ENCODE measurements at regions of chrX and their contacts with region 1.

Region 1: DNA sequence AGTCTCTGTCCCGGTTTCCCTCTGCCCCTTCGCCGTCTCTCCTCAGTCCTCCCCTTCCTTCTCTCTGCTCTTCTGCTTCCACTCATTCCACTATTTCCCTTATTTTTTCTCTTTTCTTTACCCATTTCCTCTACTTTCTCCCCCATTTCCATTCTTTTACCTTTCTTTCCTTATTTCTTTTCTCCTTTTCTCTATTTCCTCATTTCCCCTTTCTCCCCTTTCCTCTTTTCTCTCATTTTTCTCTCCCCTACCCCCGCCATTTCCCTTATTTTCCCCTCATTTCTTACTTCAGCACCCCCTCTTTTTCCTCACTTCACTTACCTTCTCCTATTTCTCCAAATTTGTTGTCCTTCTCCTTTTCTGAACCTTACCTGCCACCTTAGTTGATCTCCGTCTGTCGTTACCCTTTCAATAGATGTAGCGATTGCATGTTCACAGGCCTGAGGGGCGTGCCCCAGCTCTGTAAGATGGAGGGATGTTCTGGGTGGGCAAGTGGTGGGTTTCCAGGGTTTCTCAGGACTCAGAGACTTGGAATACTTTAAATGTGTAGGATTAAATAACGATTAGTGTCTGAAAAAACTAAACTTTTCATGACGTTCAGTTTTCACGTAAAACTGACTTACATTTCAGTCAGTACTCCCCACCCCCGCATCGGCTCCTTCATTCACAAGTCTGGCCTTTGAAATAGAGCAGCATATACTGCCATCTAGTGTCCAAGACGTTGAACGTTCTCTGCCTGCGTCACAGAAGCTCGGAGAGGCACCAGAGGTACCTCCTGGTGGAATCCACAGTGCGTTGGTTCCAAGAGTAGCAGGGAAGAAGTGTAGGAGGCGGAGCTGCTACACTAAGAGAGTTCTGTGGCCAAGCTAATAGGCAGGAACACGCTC is 641 bp upstream of the NCBP2L start:
- DNase-seq: peak; percentile 40 to 95 (median 72)

Region 2: GRCh38 chrX:107659768-107660167 is 117.1 kb before region 1 on chrX:
- intact Hi-C with region 1: loop called (anchors 1 kb)
- DNase-seq: peak in 1 of 10 donors; percentile 24

Region 3: GRCh38 chrX:107684956-107685385 is 91.9 kb before region 1 on chrX:
- intact Hi-C with region 1: no loop called
- DNase-seq: peak in 2 of 10 donors; percentile 33 to 80

Region 4: DNA sequence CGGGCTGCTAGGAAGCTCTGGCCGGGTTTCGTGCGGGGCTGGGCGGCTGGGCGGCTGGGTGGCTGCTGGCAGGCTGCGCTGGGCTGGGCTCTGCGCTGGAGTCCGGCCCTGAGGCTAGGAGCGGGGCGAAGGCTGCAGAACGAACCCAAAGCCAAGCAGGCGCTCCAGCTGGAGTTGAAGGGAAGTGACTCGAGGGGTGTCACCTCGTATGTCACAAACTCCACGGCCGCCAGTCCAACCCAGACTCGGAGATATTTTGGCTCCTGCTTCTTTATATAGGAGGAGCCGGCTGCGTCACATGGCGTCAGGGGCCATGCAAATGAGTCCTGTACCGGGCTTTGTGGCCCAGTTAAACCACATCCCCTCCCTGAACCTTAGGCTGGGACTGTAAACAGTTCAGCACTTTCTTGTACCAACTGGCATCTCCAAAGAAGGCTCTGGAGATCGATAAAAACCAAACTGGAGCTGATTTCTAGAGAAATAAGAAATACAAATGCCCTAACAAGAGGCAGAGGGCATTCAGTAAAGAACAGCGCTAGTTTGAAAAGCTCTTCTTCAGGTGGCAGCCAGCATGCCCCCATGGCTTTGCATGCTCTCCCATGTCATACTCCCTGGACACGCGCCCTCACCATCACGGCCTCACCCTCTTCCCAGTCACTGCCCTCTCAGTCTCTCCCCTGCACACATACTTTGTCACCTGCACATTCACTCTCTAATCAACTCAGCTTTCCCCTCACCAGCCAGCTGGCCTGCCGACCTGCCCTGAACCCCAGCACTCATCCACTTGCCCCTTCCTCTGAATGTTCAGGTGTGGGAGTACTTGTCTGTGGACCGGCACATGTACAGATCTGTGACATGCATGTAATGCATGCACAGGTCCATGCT is 59.8 kb before region 1 on chrX:
- intact Hi-C with region 1: loop called (anchors 2 kb)
- DNase-seq: peak; percentile 57 to 95 (median 76)

Region 5: DNA sequence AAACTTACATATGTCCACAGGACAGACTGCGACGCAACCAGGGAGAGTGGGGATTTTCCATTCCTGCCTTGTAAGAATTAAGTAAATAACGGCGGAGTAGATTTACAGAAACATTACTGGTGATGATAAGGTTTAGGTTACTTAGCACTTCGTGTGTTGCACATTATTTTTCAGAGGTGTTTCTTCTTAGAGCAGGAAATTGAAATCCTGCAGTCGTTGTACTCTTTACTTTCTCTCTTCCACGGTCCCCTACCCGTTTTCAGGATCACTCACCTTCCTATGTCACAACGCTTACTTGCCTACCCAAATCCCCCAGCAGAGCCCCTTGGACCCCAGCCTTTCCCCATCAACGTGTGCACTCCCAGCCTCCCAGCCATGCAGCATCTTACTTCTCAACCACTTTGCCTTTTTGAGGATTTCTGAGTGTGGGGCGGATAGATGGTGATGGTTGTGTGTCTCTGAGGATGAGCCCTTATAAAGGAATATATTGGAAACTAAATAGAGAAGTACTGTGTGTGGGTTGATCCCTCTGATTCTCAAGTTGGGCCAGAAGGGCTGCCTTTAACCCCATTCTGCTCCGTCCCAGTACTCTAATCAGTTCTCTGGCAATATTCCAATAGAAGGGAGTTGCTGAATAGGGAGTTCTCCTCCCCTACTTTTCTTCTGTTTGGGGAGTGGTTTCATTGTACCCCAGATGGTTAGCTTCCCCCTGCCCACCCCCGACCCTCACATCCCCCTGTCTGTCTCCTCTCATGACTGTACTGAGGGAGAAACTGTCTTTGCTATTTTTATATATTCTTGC is 50.3 kb after region 1 on chrX:
- intact Hi-C with region 1: no loop called
- DNase-seq: no peak

Measured in posterior cingulate gyrus (tissue), 11 donors.